ENCODE measurements at regions of chr9 and their contacts with region 1.

Region 1: GRCh38 chr9:35756275-35757225 is 2.5 kb upstream of the MSMP start:
- DNase-seq: peak; percentile 88
- H3K4me3 ChIP-seq: peak overlapping the region; percentile 52 to 65
- H3K27ac ChIP-seq: peak overlapping the region in 1 of 2 experiments; percentile 75; a peak in 3 of 4 replicates
- H3K4me1 ChIP-seq: peaks cover 9 to 17% of the 10 kb centered on the region in 2 experiments; a peak in 3 of 4 replicates
- H3K27me3 ChIP-seq: no peaks in the 10 kb centered on the region
- CTCF ChIP-seq: peak; percentile 61
- EP300 ChIP-seq: no peak
- RAD21 ChIP-seq: peak; percentile 47

Region 2: GRCh38 chr9:35741740-35742139 is 14.8 kb before region 1 on chr9:
- CTCF ChIA-PET with region 1: interaction called, 16 read pairs
- POLR2A ChIA-PET with region 1: interaction called, 4 read pairs
- DNase-seq: no peak
- H3K4me3 ChIP-seq: no peak overlapping the region
- H3K27ac ChIP-seq: no peak overlapping the region
- H3K4me1 ChIP-seq: peaks cover 7 to 12% of the 10 kb centered on the region in 2 experiments; a peak in 2 of 4 replicates
- H3K27me3 ChIP-seq: no peaks in the 10 kb centered on the region
- CTCF ChIP-seq: no peak
- EP300 ChIP-seq: no peak
- RAD21 ChIP-seq: no peak

Region 3: GRCh38 chr9:35951736-35952135 is 195.2 kb after region 1 on chr9:
- CTCF ChIA-PET with region 1: no interaction called
- POLR2A ChIA-PET with region 1: no interaction called
- DNase-seq: no peak
- H3K4me3 ChIP-seq: no peak overlapping the region
- H3K27ac ChIP-seq: peak overlapping the region in 1 of 2 experiments; percentile 26; a peak in 2 of 4 replicates
- H3K4me1 ChIP-seq: peaks cover 0 to 6% of the 10 kb centered on the region in 2 experiments; a peak in 1 of 4 replicates
- H3K27me3 ChIP-seq: no peaks in the 10 kb centered on the region
- CTCF ChIP-seq: no peak
- EP300 ChIP-seq: no peak
- RAD21 ChIP-seq: no peak